Activated naive CD4-positive, alpha-beta T cell treated with anti-CD3 and anti-CD28 coated beads for 36 hours (primary cell): ENCODE measurements at regions of chr3 and their contacts with region 1.

Region 1: GRCh38 chr3:179147873-179148615 is at the start of gene PIK3CA:
- DNase-seq: peak; percentile 95
- H3K4me3 Mint-ChIP-seq: peak within 1 kb of the TSS; percentile 94
- H3K27ac Mint-ChIP-seq: peak within 1 kb of the TSS; percentile 96
- H3K4me1 Mint-ChIP-seq: peaks cover 36% of the 10 kb centered on the region
- H3K27me3 Mint-ChIP-seq: no peaks in the 10 kb centered on the region
- total RNA-seq, gene PIK3CA: 15.8 to 15.9 TPM

Region 2: DNA sequence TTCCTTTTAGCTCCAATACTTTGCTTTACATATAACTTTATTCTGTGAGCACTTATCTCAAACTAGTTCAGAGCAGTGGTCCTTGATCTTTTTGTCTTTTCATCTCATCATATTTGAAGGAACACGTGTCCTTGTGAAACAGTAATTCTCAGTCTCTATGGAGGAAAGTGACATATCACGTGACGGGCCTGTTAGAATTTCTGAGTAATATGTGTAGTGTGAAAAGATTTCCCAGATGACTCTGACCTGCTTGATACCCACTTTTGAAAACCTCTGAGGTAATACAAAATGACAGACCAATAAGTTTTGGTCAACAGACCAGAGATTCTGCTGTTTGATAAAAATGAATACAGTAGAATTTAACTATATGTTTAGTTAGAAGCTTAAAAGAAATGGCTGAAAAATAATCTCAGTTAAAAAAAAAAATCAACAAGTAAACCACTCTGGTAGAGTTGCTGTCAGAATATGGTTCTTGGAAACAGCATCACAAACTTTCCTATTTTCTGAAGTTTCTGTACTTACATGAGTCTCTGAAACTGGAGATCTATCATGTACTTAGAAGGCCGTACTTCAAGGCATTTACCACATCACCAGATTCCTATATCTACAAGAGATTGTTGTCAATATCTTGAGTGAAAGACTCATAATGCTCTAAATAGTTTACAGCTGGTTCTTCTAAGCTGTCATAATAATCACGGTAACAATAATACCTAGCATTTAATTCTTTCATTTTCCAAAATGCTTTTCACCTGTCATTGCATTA is 1360.6 kb before region 1 on chr3:
- CTCF ChIA-PET with region 1: no interaction called
- intact Hi-C with region 1: loop called (anchors 1 kb)
- DNase-seq: peak; percentile 36
- H3K4me3 Mint-ChIP-seq: no peak overlapping the region
- H3K27ac Mint-ChIP-seq: peak overlapping the region; percentile 65
- H3K4me1 Mint-ChIP-seq: peaks cover 29% of the 10 kb centered on the region
- H3K27me3 Mint-ChIP-seq: no peaks in the 10 kb centered on the region

Region 3: DNA sequence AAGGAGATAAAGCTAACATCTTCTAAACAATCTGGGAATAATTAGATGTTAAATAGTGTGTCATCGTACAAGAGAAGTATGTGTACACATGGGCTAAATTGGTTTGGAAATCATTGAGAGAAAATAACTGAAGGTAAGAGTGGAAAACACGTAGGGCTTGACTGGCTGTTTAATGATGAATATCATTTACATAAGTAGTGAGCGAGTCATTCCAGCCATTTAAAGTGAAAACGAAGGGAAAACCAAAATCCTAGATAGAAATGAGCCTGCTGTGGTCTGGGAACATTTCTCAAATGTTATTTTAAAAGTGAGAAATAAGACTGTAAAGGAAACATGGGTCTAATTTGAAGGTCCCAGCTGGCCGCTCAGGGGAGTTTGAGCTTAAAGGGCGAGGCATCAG is 653.7 kb before region 1 on chr3:
- CTCF ChIA-PET with region 1: no interaction called
- intact Hi-C with region 1: no loop called
- DNase-seq: no peak
- H3K4me3 Mint-ChIP-seq: no peak overlapping the region
- H3K27ac Mint-ChIP-seq: no peak overlapping the region
- H3K4me1 Mint-ChIP-seq: no peaks in the 10 kb centered on the region
- H3K27me3 Mint-ChIP-seq: peaks cover 8% of the 10 kb centered on the region

Region 4: DNA sequence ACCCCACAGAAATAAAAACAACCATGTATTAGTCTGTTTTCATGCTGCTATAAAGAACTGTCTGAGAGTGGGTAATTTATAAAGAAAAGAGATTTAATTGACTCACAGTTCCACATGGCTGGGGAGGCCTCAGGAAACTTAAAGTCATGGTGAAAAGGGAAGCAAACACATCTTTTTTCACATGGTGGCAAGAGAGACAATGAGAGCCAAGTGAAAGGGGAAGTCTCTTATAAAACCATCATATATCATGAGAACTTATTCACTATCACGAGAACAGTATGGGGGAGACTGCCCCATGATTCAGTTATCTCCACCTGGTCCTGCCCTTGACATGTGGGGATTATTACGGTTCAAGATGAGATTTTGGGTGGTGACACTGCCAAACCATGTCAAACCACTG is 217.9 kb before region 1 on chr3:
- CTCF ChIA-PET with region 1: no interaction called
- intact Hi-C with region 1: no loop called
- DNase-seq: no peak
- H3K4me3 Mint-ChIP-seq: no peak overlapping the region
- H3K27ac Mint-ChIP-seq: no peak overlapping the region
- H3K4me1 Mint-ChIP-seq: no peaks in the 10 kb centered on the region
- H3K27me3 Mint-ChIP-seq: no peaks in the 10 kb centered on the region

Region 5: GRCh38 chr3:179105881-179106280 is 42.2 kb before region 1 on chr3:
- CTCF ChIA-PET with region 1: interaction called, 3 read pairs
- intact Hi-C with region 1: loop called (anchors 1 kb)
- DNase-seq: no peak
- H3K4me3 Mint-ChIP-seq: no peak overlapping the region
- H3K27ac Mint-ChIP-seq: no peak overlapping the region
- H3K4me1 Mint-ChIP-seq: peaks cover 1% of the 10 kb centered on the region
- H3K27me3 Mint-ChIP-seq: no peaks in the 10 kb centered on the region

Region 6: GRCh38 chr3:179166561-179167201 is 18.6 kb after region 1 on chr3:
- CTCF ChIA-PET with region 1: no interaction called
- intact Hi-C with region 1: no loop called
- DNase-seq: no peak
- H3K4me3 Mint-ChIP-seq: no peak overlapping the region
- H3K27ac Mint-ChIP-seq: no peak overlapping the region
- H3K4me1 Mint-ChIP-seq: peaks cover 31% of the 10 kb centered on the region
- H3K27me3 Mint-ChIP-seq: no peaks in the 10 kb centered on the region

Region 7: DNA sequence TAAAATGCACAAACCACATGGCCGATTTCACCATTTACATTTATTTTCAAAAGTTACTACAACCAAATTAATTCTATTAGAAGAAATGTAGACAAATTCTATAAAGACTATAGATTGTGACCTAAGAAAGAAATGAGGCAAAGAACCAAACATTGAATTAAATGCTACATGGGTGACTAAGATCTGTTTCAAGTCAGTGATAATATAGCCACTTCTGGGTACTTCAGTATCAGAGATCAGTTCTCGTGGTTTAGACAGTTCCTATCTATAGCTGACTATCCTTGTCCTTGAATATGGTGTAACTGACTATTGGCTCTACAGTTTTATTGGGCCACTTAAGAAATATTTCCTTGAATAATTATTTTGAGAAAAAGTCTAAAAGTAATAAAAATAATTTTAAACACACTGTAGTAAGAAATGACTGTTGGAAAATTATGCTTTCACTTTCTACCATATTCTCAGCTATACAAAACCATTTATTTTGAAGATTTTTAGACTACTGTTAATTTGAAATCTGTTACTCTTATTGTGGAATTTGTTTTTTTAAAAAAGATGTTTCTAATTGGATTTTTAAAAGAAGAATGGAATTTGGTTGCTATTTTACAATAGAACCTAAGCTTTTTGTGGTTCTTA is 88.7 kb after region 1 on chr3:
- CTCF ChIA-PET with region 1: interaction called, 3 read pairs
- intact Hi-C with region 1: loop called (anchors 1 kb)
- DNase-seq: no peak
- H3K4me3 Mint-ChIP-seq: no peak overlapping the region
- H3K27ac Mint-ChIP-seq: no peak overlapping the region
- H3K4me1 Mint-ChIP-seq: peaks cover 3% of the 10 kb centered on the region
- H3K27me3 Mint-ChIP-seq: no peaks in the 10 kb centered on the region

Region 8: GRCh38 chr3:179322286-179323196 is 174.5 kb after region 1 on chr3 and contains the start of gene ZNF639:
- CTCF ChIA-PET with region 1: interaction called, 12 read pairs
- intact Hi-C with region 1: loop called (anchors 1 kb)
- DNase-seq: peak; percentile 78
- H3K4me3 Mint-ChIP-seq: peak within 1 kb of the TSS; percentile 89
- H3K27ac Mint-ChIP-seq: peak within 1 kb of the TSS; percentile 93
- H3K4me1 Mint-ChIP-seq: peaks cover 26% of the 10 kb centered on the region
- H3K27me3 Mint-ChIP-seq: no peaks in the 10 kb centered on the region
- total RNA-seq, gene ZNF639: 23.3 to 26.0 TPM

Region 9: DNA sequence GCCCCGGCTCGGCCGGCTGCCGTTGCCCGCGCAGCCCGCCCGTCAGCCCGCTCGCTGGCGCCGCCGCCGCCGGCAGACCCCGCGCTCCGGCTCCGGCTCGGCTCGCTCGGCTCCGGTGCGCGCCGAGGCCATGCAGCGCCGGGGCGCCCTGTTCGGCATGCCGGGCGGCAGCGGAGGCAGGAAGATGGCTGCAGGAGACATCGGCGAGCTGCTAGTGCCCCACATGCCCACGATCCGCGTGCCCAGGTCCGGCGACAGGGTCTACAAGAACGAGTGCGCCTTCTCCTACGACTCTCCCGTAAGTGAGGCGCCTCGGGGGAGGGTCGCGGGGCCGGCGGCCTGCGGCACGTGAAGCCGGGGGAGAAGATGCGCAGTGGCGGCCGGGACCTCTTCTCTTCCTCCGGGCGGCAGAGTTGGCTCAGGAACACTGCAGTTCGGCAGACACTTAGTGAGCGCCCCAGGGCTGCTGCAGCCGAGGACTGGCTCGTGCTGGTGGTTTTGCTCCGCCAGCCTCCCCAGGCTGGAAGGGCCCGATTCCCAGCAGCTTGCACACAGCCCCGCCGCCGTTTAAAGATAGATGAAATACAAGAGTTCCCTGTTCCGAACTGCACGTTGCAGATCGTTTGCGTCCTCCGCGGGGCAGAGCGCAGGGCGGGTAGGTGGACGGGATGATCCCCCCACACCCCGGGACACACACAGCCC is 505.2 kb after region 1 on chr3:
- CTCF ChIA-PET with region 1: no interaction called
- intact Hi-C with region 1: loop called (anchors 1 kb)
- DNase-seq: peak; percentile 72
- H3K4me3 Mint-ChIP-seq: peak overlapping the region; percentile 85
- H3K27ac Mint-ChIP-seq: peak overlapping the region; percentile 67
- H3K4me1 Mint-ChIP-seq: peaks cover 17% of the 10 kb centered on the region
- H3K27me3 Mint-ChIP-seq: peaks cover 8% of the 10 kb centered on the region

Region 10: GRCh38 chr3:179942553-179943075 is 794.6 kb after region 1 on chr3:
- CTCF ChIA-PET with region 1: no interaction called
- intact Hi-C with region 1: no loop called
- DNase-seq: no peak
- H3K4me3 Mint-ChIP-seq: no peak overlapping the region
- H3K27ac Mint-ChIP-seq: no peak overlapping the region
- H3K4me1 Mint-ChIP-seq: no peaks in the 10 kb centered on the region
- H3K27me3 Mint-ChIP-seq: peaks cover 21% of the 10 kb centered on the region